ENCODE measurements at regions of chr15 and their contacts with region 1.

Region 1: DNA sequence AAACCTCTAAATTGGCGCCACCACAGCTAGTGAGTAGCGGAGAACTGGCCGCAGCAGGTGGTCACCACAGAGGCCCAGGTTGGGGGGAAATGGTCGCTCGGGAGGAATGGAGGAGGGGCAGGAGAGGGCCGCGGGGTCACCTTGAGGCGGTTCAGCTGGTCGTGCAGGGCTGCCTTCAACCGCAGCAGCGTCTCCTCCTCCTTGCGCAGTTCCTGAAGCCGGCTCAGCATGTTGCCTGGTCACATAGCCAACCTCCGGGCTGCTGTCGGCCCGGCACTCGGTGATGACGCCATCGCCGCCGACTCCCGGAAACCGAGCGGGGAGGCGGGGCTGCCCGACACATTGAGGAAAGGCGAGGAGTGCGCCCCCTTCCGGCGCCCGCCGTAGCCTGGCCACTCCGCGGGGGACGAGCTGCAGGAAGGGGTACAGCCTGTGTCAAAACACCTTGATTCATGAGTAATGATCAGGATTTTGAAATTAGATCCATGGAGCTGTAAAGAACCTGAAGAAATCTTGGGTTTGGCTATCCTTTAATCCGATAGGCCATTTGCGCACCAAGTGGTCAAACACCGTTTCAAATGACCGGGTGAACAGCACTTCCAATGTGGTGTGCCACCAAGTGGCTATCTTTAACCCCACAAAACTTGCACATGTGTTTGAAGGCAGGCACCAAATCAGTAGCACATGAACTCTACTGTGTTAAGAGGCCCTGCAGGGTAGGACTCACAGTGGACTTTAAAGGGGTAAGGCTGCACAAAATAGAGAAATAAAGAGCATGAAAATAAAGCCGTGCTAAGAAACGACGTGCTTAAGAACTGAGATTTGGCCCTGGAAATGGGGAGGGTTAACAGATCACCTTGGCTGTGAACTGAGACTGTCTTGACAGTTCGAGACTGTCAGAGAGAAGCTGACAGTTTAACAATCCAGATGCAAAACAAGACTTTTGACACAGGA is at the start of gene SNAPC5:
- H3K4me3 Mint-ChIP-seq: peak within 1 kb of the TSS; percentile 90
- H3K27ac Mint-ChIP-seq: peak within 1 kb of the TSS; percentile 98
- H3K4me1 Mint-ChIP-seq: peaks cover 52% of the 10 kb centered on the region
- H3K27me3 Mint-ChIP-seq: no peaks in the 10 kb centered on the region

Region 2: DNA sequence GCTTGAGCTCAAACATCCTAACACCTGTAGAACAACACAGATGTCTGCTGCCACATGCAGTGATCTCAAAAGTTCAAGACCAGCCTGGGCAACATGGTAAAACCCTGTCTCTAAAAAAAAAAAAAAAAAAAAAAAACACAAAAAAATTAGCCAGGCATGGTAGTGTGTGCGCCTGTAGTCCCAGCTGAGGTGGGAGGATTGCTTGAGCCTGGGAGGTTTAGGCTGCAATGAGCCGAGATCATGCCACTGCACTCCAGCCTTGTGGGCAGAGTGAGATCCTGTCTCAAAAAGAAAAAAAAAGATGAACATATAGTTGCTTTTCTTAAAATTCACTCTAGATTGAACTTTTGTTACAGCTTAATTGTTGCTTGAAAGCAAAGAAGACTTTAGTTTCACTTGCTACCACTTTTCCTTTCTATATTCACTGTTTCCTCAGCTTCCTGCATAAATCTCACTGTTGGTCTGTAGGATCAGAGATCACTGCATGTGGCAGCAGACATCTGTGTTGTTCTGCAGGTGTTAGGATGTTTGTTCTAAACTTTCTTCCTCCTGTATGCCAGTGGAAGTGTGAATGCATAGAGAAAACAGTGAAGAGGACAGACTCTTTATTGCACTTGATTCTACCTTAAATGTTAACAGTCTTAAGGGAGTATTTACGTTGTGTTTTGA is 615.9 kb before region 1 on chr15:
- intact Hi-C with region 1: no loop called
- H3K4me3 Mint-ChIP-seq: no peak overlapping the region
- H3K27ac Mint-ChIP-seq: no peak overlapping the region
- H3K4me1 Mint-ChIP-seq: peaks cover 22% of the 10 kb centered on the region
- H3K27me3 Mint-ChIP-seq: no peaks in the 10 kb centered on the region

Region 3: GRCh38 chr15:65993236-65993635 is 504.5 kb before region 1 on chr15:
- intact Hi-C with region 1: no loop called
- H3K4me3 Mint-ChIP-seq: no peak overlapping the region
- H3K27ac Mint-ChIP-seq: no peak overlapping the region
- H3K4me1 Mint-ChIP-seq: no peaks in the 10 kb centered on the region
- H3K27me3 Mint-ChIP-seq: peaks cover 29% of the 10 kb centered on the region

Region 4: DNA sequence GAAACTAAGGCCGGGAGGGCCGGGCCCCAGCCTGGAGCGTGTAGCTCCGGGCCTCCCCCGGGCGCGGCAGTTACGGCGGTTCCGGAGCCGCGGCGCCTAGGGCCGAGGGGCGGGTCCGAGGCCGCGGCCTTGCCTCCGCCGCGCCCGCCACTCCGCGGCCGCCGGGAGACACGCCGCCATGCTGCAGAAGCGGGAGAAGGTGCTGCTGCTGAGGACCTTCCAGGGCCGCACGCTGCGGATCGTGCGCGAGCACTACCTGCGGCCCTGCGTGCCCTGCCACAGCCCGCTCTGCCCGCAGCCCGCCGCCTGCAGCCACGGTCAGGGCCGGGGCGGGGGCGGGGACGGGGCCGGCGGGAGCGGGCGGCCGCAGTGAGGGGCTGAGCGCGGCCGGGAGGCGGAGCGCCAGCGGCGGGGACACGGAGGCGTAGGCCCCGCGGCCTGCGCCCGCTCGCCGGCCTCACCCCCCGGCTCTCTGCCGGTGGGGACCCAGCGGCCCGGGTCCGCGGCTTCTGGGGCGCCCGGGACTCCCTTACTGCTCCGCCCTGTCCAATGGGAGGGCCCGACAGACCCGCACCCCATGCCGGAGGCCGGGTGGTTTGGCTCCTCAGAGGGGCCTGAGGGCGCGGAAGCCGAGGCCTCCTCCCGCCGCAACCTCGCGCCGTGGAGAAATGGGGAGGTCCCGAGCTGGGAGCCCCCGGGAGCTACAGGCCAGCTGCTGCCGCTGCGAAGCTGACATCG is 204.2 kb before region 1 on chr15 and contains the start of gene DIS3L:
- intact Hi-C with region 1: loop called (anchors 5 kb)
- H3K4me3 Mint-ChIP-seq: peak within 1 kb of the TSS; percentile 78
- H3K27ac Mint-ChIP-seq: peak within 1 kb of the TSS; percentile 82
- H3K4me1 Mint-ChIP-seq: peaks cover 13% of the 10 kb centered on the region
- H3K27me3 Mint-ChIP-seq: peaks cover 3% of the 10 kb centered on the region

Region 5: GRCh38 chr15:66356345-66357236 is 141.2 kb before region 1 on chr15 and contains the start of gene TIPIN:
- intact Hi-C with region 1: loop called (anchors 1 kb)
- H3K4me3 Mint-ChIP-seq: peak within 1 kb of the TSS; percentile 93
- H3K27ac Mint-ChIP-seq: peak within 1 kb of the TSS; percentile 92
- H3K4me1 Mint-ChIP-seq: peaks cover 27% of the 10 kb centered on the region
- H3K27me3 Mint-ChIP-seq: no peaks in the 10 kb centered on the region

Measured in dendritic cell treated with granulocyte-macrophage colony-stimulating factor and Interleukin-4, amounts not matched to agents 40 ng/mL and 50 ng/mL, for 4 days (primary cell).